ENCODE measurements at regions of chr22 and their contacts with region 1.

Region 1: GRCh38 chr22:26172389-26172990 is 3.2 kb downstream of the SEZ6L start:
- DNase-seq: peak; percentile 32
- ATAC-seq: no peak
- H3K4me3 ChIP-seq: no peak overlapping the region
- H3K4me3 Mint-ChIP-seq: no peak overlapping the region
- H3K27ac ChIP-seq: no peak overlapping the region
- H3K27ac Mint-ChIP-seq: no peak overlapping the region
- H3K4me1 ChIP-seq: peaks cover 16 to 18% of the 10 kb centered on the region in 2 donors
- H3K4me1 Mint-ChIP-seq: peaks cover 14% of the 10 kb centered on the region
- H3K27me3 ChIP-seq: peaks cover 0 to 43% (median 24%) of the 10 kb centered on the region in 4 experiments
- H3K27me3 Mint-ChIP-seq: peaks cover 69% of the 10 kb centered on the region
- CTCF ChIP-seq: peak; percentile 73

Region 2: GRCh38 chr22:26066534-26066933 is 106.0 kb before region 1 on chr22:
- CTCF ChIA-PET with region 1: no interaction called
- POLR2A ChIA-PET with region 1: no interaction called
- intact Hi-C with region 1: no loop called
- DNase-seq: no peak
- ATAC-seq: no peak
- H3K4me3 ChIP-seq: no peak overlapping the region
- H3K4me3 Mint-ChIP-seq: no peak overlapping the region
- H3K27ac ChIP-seq: no peak overlapping the region
- H3K27ac Mint-ChIP-seq: no peak overlapping the region
- H3K4me1 ChIP-seq: no peaks in the 10 kb centered on the region
- H3K4me1 Mint-ChIP-seq: no peaks in the 10 kb centered on the region
- H3K27me3 ChIP-seq: peaks cover 0 to 15% (median 2%) of the 10 kb centered on the region in 4 experiments
- H3K27me3 Mint-ChIP-seq: peaks cover 39% of the 10 kb centered on the region
- CTCF ChIP-seq: no peak

Region 3: GRCh38 chr22:26115266-26115665 is 57.2 kb before region 1 on chr22:
- CTCF ChIA-PET with region 1: no interaction called
- POLR2A ChIA-PET with region 1: no interaction called
- intact Hi-C with region 1: no loop called
- DNase-seq: no peak
- ATAC-seq: no peak
- H3K4me3 ChIP-seq: no peak overlapping the region
- H3K4me3 Mint-ChIP-seq: no peak overlapping the region
- H3K27ac ChIP-seq: no peak overlapping the region
- H3K27ac Mint-ChIP-seq: no peak overlapping the region
- H3K4me1 ChIP-seq: no peaks in the 10 kb centered on the region
- H3K4me1 Mint-ChIP-seq: no peaks in the 10 kb centered on the region
- H3K27me3 ChIP-seq: peaks cover 0 to 6% (median 4%) of the 10 kb centered on the region in 4 experiments
- H3K27me3 Mint-ChIP-seq: peaks cover 61% of the 10 kb centered on the region
- CTCF ChIP-seq: no peak

Region 4: DNA sequence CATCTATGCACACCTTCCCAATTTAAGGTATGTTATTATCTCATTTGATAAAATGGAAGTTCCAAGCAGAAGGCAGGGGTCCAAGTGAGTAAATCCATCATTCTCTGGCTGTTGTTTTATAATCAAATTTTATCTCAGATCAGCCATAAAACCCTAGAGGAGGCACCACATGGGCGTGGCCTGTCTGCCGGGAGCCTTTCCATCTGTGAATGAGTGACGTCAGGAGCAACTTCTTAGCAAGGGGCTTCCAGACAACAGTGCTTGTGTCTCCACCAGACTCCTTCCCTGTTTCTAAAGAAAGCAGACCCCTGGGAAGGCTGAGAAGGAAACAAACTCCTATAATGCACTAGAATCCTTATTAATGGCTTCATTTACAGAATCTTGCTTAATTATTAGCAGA is 10.2 kb after region 1 on chr22:
- CTCF ChIA-PET with region 1: interaction called, 13 read pairs
- POLR2A ChIA-PET with region 1: no interaction called
- intact Hi-C with region 1: no loop called
- DNase-seq: no peak
- ATAC-seq: no peak
- H3K4me3 ChIP-seq: no peak overlapping the region
- H3K4me3 Mint-ChIP-seq: no peak overlapping the region
- H3K27ac ChIP-seq: no peak overlapping the region
- H3K27ac Mint-ChIP-seq: no peak overlapping the region
- H3K4me1 ChIP-seq: no peaks in the 10 kb centered on the region
- H3K4me1 Mint-ChIP-seq: no peaks in the 10 kb centered on the region
- H3K27me3 ChIP-seq: peaks cover 0 to 3% (median 3%) of the 10 kb centered on the region in 4 experiments
- H3K27me3 Mint-ChIP-seq: peaks cover 28% of the 10 kb centered on the region
- CTCF ChIP-seq: no peak

Region 5: GRCh38 chr22:26314656-26315055 is 142.2 kb after region 1 on chr22:
- CTCF ChIA-PET with region 1: no interaction called
- POLR2A ChIA-PET with region 1: no interaction called
- intact Hi-C with region 1: no loop called
- DNase-seq: no peak
- ATAC-seq: no peak
- H3K4me3 ChIP-seq: no peak overlapping the region
- H3K4me3 Mint-ChIP-seq: no peak overlapping the region
- H3K27ac ChIP-seq: no peak overlapping the region
- H3K27ac Mint-ChIP-seq: no peak overlapping the region
- H3K4me1 ChIP-seq: no peaks in the 10 kb centered on the region
- H3K4me1 Mint-ChIP-seq: no peaks in the 10 kb centered on the region
- H3K27me3 ChIP-seq: peaks cover 0 to 12% (median 0%) of the 10 kb centered on the region in 4 experiments
- H3K27me3 Mint-ChIP-seq: peaks cover 53% of the 10 kb centered on the region
- CTCF ChIP-seq: no peak